PC-9 (cell line): ENCODE measurements at regions of chr6 and their contacts with region 1.

Region 1: GRCh38 chr6:79706527-79706926 is 75.4 kb downstream of the SH3BGRL2 start:
- DNase-seq: no peak
- H3K4me3 ChIP-seq: no peak overlapping the region
- H3K27ac ChIP-seq: no peak overlapping the region
- H3K4me1 ChIP-seq: no peaks in the 10 kb centered on the region
- H3K27me3 ChIP-seq: no peaks in the 10 kb centered on the region
- CTCF ChIP-seq: no peak

Region 2: GRCh38 chr6:77986380-77987034 is 1720.0 kb before region 1 on chr6:
- CTCF ChIA-PET with region 1: no interaction called
- POLR2A ChIA-PET with region 1: interaction called, 29 read pairs
- intact Hi-C with region 1: no loop called
- DNase-seq: no peak
- H3K4me3 ChIP-seq: no peak overlapping the region
- H3K27ac ChIP-seq: no peak overlapping the region
- H3K4me1 ChIP-seq: no peaks in the 10 kb centered on the region
- H3K27me3 ChIP-seq: no peaks in the 10 kb centered on the region
- CTCF ChIP-seq: no peak